Stomach (tissue), 19 donors: ENCODE measurements at regions of chr3 and their contacts with region 1.

Region 1: DNA sequence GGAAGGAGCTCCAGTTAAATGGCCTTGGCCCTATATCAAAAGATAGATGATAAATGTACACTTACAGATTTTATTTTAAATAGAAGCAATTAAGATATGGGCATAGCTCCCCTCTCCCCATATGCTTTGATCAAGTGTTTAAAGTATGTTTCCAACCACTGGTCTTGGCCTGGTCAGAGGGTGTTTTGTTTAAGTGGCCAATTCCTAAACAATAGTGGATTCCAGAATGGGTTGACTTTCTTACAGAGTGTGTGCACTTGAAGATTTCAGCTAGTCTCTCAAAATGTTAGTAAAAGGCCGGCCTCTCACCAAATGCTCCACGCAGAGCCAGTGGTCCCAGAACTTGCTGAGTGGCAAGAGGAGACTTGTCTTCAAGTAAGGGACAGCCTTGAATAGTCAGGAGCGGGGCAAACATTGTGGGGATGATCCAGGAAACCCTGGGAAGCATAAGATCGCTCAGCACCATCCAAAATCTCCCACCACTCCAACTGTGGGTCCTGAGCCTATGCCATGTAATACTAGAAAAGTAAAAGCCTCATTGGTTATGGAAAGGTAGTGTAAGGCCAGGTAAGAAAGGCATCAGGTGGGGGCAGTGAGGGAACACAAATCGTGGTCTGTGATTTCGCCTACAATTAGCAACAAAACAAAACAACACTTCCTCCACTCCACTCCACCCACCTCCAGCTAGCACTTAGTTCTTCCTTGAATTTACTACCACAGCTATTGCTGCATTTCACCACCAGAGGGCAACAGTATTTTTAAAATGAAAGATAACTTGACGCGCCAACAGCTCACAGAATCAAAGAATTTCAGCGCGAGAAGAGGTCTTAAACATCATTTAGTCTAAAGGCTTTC is 4.8 kb downstream of the RARRES1 start:
- DNase-seq: peak; percentile 45 to 89
- H3K4me3 ChIP-seq: peak overlapping the region in 1 of 4 donors; percentile 10
- H3K27ac ChIP-seq: peak overlapping the region in 4 of 5 donors; percentile 29 to 78 (median 57)
- H3K4me1 ChIP-seq: peaks cover 16 to 70% (median 34%) of the 10 kb centered on the region in 4 donors
- H3K27me3 ChIP-seq: no peaks in the 10 kb centered on the region
- CTCF ChIP-seq: peak in 5 of 7 experiments; percentile 72 to 90 (median 87)
- EP300 ChIP-seq: no peak
- POLR2A ChIP-seq: no peak

Region 2: GRCh38 chr3:158659454-158660237 is 67.8 kb before region 1 on chr3:
- intact Hi-C with region 1: loop called (anchors 10 kb)
- DNase-seq: peak; percentile 43 to 72
- H3K4me3 ChIP-seq: no peak overlapping the region
- H3K27ac ChIP-seq: peak overlapping the region in 1 of 5 donors; percentile 31
- H3K4me1 ChIP-seq: peaks cover 0 to 10% (median 4%) of the 10 kb centered on the region in 4 donors
- H3K27me3 ChIP-seq: no peaks in the 10 kb centered on the region
- CTCF ChIP-seq: peak in 5 of 7 experiments; percentile 28 to 60 (median 51)
- EP300 ChIP-seq: no peak
- POLR2A ChIP-seq: no peak

Region 3: GRCh38 chr3:158845765-158846350 is 118.4 kb after region 1 on chr3:
- intact Hi-C with region 1: no loop called
- DNase-seq: peak in 1 of 2 donors; percentile 65
- H3K4me3 ChIP-seq: no peak overlapping the region
- H3K27ac ChIP-seq: no peak overlapping the region
- H3K4me1 ChIP-seq: peaks cover 0 to 5% (median 0%) of the 10 kb centered on the region in 4 donors
- H3K27me3 ChIP-seq: no peaks in the 10 kb centered on the region
- CTCF ChIP-seq: peak in 5 of 7 experiments; percentile 45 to 64 (median 58)
- EP300 ChIP-seq: no peak
- POLR2A ChIP-seq: no peak